ENCODE measurements at regions of chr16 and their contacts with region 1.

Region 1: GRCh38 chr16:18801197-18801972 is at the start of gene ARL6IP1:
- DNase-seq: peak; percentile 97 to 100
- ATAC-seq: peak; percentile 93 to 95
- H3K4me3 ChIP-seq: peak within 1 kb of the TSS; percentile 92
- H3K27ac ChIP-seq: peak within 1 kb of the TSS; percentile 87 to 94
- H3K4me1 ChIP-seq: peaks cover 61% of the 10 kb centered on the region
- CTCF ChIP-seq: peak; percentile 87
- EP300 ChIP-seq: no peak
- POLR2A ChIP-seq: peak; percentile 100
- RAD21 ChIP-seq: peak; percentile 49 to 63
- polyA plus RNA-seq, gene ARL6IP1: 403 and 479 TPM in 2 replicates

Region 2: DNA sequence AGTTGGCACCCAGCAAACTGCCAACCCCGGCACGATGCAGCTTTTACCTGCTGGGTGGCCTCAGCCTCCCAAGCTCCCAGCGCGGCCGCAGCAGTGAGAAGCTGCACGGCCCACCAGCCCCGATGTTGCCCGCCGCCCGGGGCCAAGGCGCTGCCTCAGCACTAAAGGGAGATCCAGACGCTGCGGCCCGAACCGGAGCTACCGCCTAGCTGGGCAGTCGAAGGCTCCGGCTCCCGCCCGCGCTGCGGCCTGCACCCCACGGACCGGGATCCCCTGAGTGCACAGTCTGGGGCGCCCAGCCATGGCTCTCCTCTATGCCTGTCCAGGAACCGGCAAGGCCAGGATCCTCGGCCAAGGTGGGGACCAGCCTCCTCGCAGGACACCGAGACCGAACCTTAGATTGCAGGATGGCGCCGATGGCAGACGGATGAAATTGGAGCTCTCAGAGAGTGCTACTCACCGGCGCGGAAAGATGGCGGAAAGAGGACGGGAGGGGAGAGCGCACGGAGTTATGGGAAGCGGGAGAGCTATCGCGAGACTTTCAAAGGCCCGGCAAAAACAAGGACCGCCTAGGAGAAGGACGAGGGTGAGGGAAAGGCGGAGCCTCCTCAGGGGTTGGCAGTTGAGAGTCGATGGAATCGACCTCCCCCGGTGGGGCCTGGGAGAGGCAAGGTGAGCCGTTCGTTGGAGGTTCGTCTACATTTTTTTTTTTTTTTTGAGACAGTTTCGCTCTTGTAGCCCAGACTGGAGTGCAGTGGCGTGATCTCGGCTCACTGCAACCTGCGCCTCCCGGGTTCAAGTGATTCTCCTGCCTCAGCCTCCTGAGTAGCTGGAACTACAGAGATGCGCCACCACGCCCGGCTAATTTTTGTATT is 11.3 kb before region 1 on chr16 and contains the start of gene RPS15A:
- CTCF ChIA-PET with region 1: interaction called, 52 read pairs
- POLR2A ChIA-PET with region 1: interaction called, 208 read pairs
- DNase-seq: peak; percentile 98
- ATAC-seq: peak; percentile 97 to 98
- H3K4me3 ChIP-seq: peak within 1 kb of the TSS; percentile 99
- H3K27ac ChIP-seq: peak within 1 kb of the TSS; percentile 95 to 100
- H3K4me1 ChIP-seq: peaks cover 40% of the 10 kb centered on the region
- CTCF ChIP-seq: no peak
- EP300 ChIP-seq: no peak
- POLR2A ChIP-seq: peak; percentile 88
- RAD21 ChIP-seq: no peak
- polyA plus RNA-seq, gene RPS15A: 4,362 and 5,012 TPM in 2 replicates

Region 3: DNA sequence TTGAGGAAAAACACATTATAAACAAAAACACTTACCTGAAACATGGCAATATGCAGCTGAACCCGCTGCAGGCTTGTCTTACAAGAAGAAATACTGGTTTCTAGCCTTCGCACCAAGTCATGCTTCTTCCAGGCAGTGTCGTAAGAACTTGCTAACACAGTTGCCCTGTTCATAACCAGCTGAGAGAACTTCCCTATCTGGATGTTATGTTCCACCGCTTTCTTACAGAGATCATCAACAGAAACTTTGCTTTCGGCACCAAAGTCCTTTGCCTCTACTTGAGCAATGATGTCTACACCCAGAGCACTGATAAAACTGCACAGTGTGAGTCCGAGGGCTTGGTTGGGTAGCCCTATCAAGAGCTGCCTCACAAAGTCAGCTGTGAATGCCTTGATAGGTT is 27.9 kb after region 1 on chr16:
- CTCF ChIA-PET with region 1: interaction called, 14 read pairs
- POLR2A ChIA-PET with region 1: interaction called, 8 read pairs
- DNase-seq: no peak
- ATAC-seq: no peak
- H3K4me3 ChIP-seq: no peak overlapping the region
- H3K27ac ChIP-seq: no peak overlapping the region
- H3K4me1 ChIP-seq: no peaks in the 10 kb centered on the region
- CTCF ChIP-seq: no peak
- EP300 ChIP-seq: no peak
- POLR2A ChIP-seq: no peak
- RAD21 ChIP-seq: no peak

Region 4: GRCh38 chr16:18945233-18945632 is 143.8 kb after region 1 on chr16:
- CTCF ChIA-PET with region 1: interaction called, 16 read pairs
- POLR2A ChIA-PET with region 1: interaction called, 3 read pairs
- DNase-seq: no peak
- ATAC-seq: no peak
- H3K4me3 ChIP-seq: no peak overlapping the region; the same call in 2 of the 3 replicates
- H3K27ac ChIP-seq: peak overlapping the region in 1 of 2 experiments; percentile 87; a peak in 2 of 6 replicates
- H3K4me1 ChIP-seq: 0 out of 3 replicates have a peak, but pooled peaks cover 3% of the 10 kb centered on the region
- CTCF ChIP-seq: no peak
- EP300 ChIP-seq: no peak
- POLR2A ChIP-seq: no peak
- RAD21 ChIP-seq: no peak

Region 5: DNA sequence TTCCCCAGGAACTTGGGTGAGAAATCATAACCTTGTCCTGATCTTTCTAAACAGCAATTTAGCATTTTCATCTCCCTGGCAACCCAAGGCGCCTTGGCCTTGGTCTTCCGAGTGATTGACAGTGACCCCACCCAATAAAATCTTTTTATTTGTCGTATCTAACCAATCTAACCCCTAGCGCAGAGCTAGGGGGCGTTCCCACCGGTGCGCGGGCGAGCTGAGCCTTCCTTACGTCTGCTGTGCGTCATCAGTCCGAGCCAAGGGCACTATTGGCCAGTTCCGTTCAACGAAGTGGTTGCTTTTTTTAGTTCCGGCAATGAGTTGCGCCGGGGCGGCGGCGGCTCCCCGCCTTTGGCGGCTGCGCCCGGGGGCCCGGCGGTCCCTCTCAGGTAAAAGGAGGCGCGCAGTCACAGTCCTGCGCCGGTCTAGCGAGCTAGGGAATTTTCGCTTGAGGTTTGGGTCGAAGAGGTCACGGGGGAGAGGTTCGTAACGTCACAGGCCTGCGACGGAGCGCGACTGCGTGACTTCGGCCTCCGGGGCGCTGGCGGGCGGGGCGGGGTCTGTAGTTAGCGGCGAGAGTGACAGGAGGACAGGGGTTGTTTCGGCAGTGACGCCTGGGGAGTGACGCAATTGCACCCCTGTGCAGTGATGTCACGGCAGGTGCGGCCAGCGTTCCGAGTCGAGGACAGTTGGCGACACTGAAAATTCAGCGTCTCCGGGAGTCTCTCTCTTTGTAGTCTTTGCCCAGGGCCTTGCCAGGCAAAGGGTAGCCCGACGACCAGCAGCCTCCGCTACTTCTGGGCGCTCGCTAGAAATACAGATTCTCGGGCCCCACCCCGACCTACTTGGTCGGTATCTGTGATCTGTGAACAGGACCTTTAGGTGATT is 266.2 kb after region 1 on chr16 and contains the start of gene COQ7:
- CTCF ChIA-PET with region 1: interaction called, 4 read pairs
- POLR2A ChIA-PET with region 1: interaction called, 10 read pairs
- DNase-seq: peak; percentile 95 to 100
- ATAC-seq: peak; percentile 93
- H3K4me3 ChIP-seq: peak within 1 kb of the TSS; percentile 63
- H3K27ac ChIP-seq: peak within 1 kb of the TSS; percentile 95 to 99
- H3K4me1 ChIP-seq: peaks cover 12% of the 10 kb centered on the region; the same call in 2 of the 3 replicates
- CTCF ChIP-seq: no peak
- EP300 ChIP-seq: no peak
- POLR2A ChIP-seq: peak; percentile 17; the same call in 1 of the 2 replicates
- RAD21 ChIP-seq: no peak
- polyA plus RNA-seq, gene COQ7: 17.9 and 23.8 TPM in 2 replicates